A549 (cell line): ENCODE measurements at regions of chr22 and their contacts with region 1.

Region 1: GRCh38 chr22:41857155-41857859 is 24.4 kb downstream of the SREBF2 start:
- DNase-seq: peak; percentile 68 to 71
- ATAC-seq: peak; percentile 84 to 87
- H3K4me3 ChIP-seq: no peak overlapping the region
- H3K27ac ChIP-seq: peak overlapping the region in 1 of 2 experiments; percentile 55; a peak in 2 of 6 replicates
- H3K4me1 ChIP-seq: peaks cover 49% of the 10 kb centered on the region
- CTCF ChIP-seq: peak; percentile 59
- EP300 ChIP-seq: no peak
- POLR2A ChIP-seq: no peak
- RAD21 ChIP-seq: peak; percentile 46 to 49; a peak in 4 of 5 replicates

Region 2: GRCh38 chr22:41841085-41841659 is 16.1 kb before region 1 on chr22:
- CTCF ChIA-PET with region 1: interaction called, 14 read pairs
- POLR2A ChIA-PET with region 1: no interaction called
- DNase-seq: peak; percentile 40 to 65
- ATAC-seq: peak in 1 of 2 experiments; percentile 78; a peak in 3 of 6 replicates
- H3K4me3 ChIP-seq: no peak overlapping the region
- H3K27ac ChIP-seq: peak overlapping the region; percentile 59 to 75; a peak in 5 of 6 replicates
- H3K4me1 ChIP-seq: peaks cover 60% of the 10 kb centered on the region
- CTCF ChIP-seq: no peak
- EP300 ChIP-seq: no peak
- POLR2A ChIP-seq: no peak
- RAD21 ChIP-seq: no peak